ENCODE measurements at regions of chr17 and their contacts with region 1.

Region 1: GRCh38 chr17:59155439-59156182 is at the start of gene PRR11:
- DNase-seq: peak; percentile 65
- ATAC-seq: peak; percentile 88
- H3K4me3 Mint-ChIP-seq: no peak within 1 kb of the TSS
- H3K27ac Mint-ChIP-seq: no peak within 1 kb of the TSS
- H3K4me1 Mint-ChIP-seq: peaks cover 16% of the 10 kb centered on the region
- H3K27me3 Mint-ChIP-seq: no peaks in the 10 kb centered on the region
- CTCF ChIP-seq: no peak
- total RNA-seq, gene PRR11: 2.4 and 4.8 TPM in 2 replicates

Region 2: DNA sequence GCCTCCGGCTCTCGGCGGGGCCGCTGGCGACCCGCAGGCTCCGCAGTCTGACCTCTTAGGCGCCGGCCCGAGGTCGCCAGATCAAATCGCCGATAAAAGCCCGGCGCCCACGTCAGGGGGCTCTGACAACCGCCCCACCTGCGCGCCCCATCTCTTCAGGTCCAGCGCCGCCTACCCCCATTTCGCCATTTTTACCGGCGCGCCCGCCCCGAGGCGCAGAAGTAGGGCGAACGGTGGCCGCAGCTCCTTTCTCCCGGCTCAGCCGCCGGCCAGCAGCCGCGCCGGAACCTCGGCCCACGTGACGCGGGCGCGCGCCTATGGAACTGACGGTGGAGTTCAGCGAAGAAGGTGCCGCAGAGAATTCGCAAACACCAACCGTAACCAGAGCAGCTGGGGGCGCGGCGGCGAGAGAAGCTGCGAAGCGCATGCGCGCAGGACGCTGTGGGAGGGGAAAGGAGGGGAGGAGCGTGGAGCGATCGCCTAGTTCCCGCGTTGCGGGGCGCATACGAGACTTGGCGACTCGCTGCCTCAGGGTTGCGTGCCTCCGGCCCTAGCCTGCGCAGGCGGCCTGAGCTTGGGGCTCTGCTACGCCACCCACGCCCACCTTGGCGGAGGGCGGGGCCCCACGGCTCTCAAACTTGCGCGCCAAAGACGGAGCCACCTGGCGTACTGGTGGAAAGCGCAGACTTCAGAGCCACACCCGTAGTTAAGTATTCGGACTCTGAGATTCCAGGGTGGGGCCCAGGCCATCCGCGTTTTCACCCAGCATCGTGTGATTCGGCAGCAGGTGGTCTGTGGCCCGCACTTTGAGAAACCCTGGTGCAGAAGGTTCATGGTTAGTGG is 48.9 kb before region 1 on chr17 and contains the start of gene TRIM37:
- CTCF ChIA-PET with region 1: interaction called, 5 read pairs
- POLR2A ChIA-PET with region 1: interaction called, 18 read pairs
- intact Hi-C with region 1: loop called (anchors 1 kb)
- DNase-seq: peak; percentile 98
- ATAC-seq: peak; percentile 96
- H3K4me3 Mint-ChIP-seq: peak within 1 kb of the TSS; percentile 94
- H3K27ac Mint-ChIP-seq: peak within 1 kb of the TSS; percentile 82
- H3K4me1 Mint-ChIP-seq: peaks cover 28% of the 10 kb centered on the region
- H3K27me3 Mint-ChIP-seq: no peaks in the 10 kb centered on the region
- CTCF ChIP-seq: no peak
- total RNA-seq, gene TRIM37: 16.4 and 17.3 TPM in 2 replicates

Region 3: GRCh38 chr17:59199398-59199797 is 43.8 kb after region 1 on chr17:
- CTCF ChIA-PET with region 1: no interaction called
- POLR2A ChIA-PET with region 1: no interaction called
- intact Hi-C with region 1: no loop called
- DNase-seq: no peak
- ATAC-seq: no peak
- H3K4me3 Mint-ChIP-seq: no peak overlapping the region
- H3K27ac Mint-ChIP-seq: no peak overlapping the region
- H3K4me1 Mint-ChIP-seq: no peaks in the 10 kb centered on the region
- H3K27me3 Mint-ChIP-seq: no peaks in the 10 kb centered on the region
- CTCF ChIP-seq: no peak

Region 4: GRCh38 chr17:59372138-59372857 is 216.7 kb after region 1 on chr17:
- CTCF ChIA-PET with region 1: no interaction called
- POLR2A ChIA-PET with region 1: no interaction called
- intact Hi-C with region 1: no loop called
- DNase-seq: no peak
- ATAC-seq: peak; percentile 33
- H3K4me3 Mint-ChIP-seq: peak overlapping the region; percentile 59
- H3K27ac Mint-ChIP-seq: peak overlapping the region; percentile 89
- H3K4me1 Mint-ChIP-seq: peaks cover 88% of the 10 kb centered on the region
- H3K27me3 Mint-ChIP-seq: no peaks in the 10 kb centered on the region
- CTCF ChIP-seq: no peak

Measured in activated B cell treated with CpG ODN at 0.5 μM for 24 hours (primary cell).